ENCODE measurements at regions of chr10 and their contacts with region 1.

Region 1: DNA sequence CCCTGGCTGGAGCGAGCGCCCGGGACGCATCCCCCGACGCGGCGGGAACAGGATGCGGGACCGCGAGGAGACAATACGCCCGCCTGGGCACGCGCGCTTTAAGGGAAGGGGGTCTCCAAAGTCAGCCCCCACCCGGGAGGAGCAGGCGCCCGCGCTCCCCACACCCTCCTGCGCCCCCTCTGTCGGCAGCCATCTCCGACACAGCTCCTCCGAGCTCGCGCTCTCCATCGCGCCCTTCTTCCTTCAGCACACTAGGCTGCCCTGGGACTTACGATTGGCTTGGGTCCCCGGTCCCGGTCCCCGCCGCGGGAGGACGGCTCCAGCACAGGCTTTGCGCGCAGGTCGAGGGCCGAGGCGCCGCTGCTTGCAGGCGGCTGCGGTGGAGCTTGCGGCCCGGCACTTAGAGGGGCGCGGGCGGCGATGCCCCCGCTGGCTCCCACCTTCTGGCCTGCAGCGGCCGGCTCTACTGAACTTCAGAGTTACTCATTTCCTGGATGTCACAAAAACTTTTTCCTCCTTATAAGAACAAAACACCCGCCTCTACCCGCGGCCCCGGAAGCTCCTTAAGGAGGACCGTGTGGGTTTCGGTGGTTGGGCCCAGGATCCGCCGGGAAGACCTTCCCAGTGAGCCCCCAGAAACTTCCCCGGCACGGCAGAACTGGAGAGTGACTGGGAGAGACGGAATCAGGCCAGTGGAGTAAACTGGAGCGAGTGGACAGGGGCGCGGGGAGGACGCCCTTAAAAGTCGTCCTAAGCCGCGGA is at the start of gene ITPRIP:
- DNase-seq: peak in 1 of 2 experiments; percentile 82
- H3K4me3 ChIP-seq: peak within 1 kb of the TSS; percentile 73 to 90 (median 80)
- H3K27ac ChIP-seq: peak within 1 kb of the TSS; percentile 87
- H3K4me1 ChIP-seq: peaks cover 18 to 32% (median 23%) of the 10 kb centered on the region in 4 experiments
- H3K27me3 ChIP-seq: peaks cover 0 to 2% (median 0%) of the 10 kb centered on the region in 4 experiments; a peak in 1 of 7 replicates
- CTCF ChIP-seq: peak in 2 of 3 experiments; percentile 21 to 32; a peak in 2 of 4 replicates
- EP300 ChIP-seq: no peak
- POLR2A ChIP-seq: peak in 1 of 2 experiments; percentile 79; a peak in 2 of 3 replicates
- RAD21 ChIP-seq: no peak
- total RNA-seq, gene ITPRIP: 16.9 and 17.1 TPM in 2 replicates

Region 2: DNA sequence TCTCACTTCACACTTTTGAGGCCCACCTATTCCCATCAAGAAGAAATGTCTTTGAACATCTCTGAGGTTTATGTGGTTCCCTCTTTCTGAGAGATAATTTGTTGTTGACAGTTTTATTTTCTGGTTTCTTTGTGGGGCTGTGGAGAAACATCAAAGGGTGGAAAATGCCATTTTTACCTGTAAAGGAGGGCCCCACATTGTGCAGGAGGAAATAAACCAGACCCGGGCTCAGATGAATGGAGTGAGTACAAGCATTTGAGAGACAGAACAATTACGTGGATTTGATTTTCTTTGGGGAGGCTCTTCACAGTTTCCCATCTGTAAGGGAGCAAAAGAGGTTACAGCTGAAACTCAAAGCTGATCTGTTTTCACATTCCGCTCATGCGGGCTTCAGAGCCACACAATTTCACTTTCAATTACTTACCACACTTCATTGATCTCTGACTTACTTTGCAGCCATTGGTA is 29.7 kb before region 1 on chr10:
- CTCF ChIA-PET with region 1: interaction called, 86 read pairs
- POLR2A ChIA-PET with region 1: interaction called, 5 read pairs
- DNase-seq: no peak
- H3K4me3 ChIP-seq: no peak overlapping the region
- H3K27ac ChIP-seq: no peak overlapping the region
- H3K4me1 ChIP-seq: peaks cover 0 to 7% (median 3%) of the 10 kb centered on the region in 4 experiments; a peak in 3 of 7 replicates
- H3K27me3 ChIP-seq: no peaks in the 10 kb centered on the region
- CTCF ChIP-seq: no peak
- EP300 ChIP-seq: no peak
- POLR2A ChIP-seq: no peak
- RAD21 ChIP-seq: no peak

Region 3: DNA sequence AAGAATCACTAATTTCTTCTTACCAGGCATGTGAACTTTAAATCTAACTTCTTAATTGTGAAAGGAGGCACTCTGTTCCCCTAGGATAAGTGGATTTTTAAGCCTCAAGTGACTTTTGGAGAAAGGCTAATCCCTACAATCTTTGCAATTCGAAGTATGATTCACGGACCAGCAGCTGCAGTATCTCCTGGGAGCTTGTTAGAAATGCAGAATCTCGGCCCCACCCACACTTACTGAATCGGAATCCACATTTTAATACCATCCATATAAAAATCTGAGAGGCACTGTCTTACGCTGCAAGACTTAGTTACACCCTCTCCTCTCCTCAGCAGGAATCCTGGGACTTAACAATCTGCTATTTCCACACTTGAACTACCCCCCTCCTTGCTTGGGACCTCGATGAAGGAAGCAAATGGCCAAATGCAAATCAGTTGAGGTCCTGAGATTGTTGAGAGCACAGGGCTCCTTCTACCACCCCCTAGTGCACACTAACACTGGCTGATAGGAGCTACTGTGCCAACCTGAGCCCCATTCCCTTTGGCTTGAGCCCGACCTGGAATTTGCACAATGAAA is 20.9 kb before region 1 on chr10:
- CTCF ChIA-PET with region 1: interaction called, 21 read pairs
- POLR2A ChIA-PET with region 1: interaction called, 19 read pairs
- DNase-seq: no peak
- H3K4me3 ChIP-seq: no peak overlapping the region
- H3K27ac ChIP-seq: 0 out of 2 replicates have a peak overlapping the region, but pooled peaks have one; percentile 13
- H3K4me1 ChIP-seq: peaks cover 0 to 29% (median 23%) of the 10 kb centered on the region in 4 experiments; a peak in 6 of 7 replicates
- H3K27me3 ChIP-seq: no peaks in the 10 kb centered on the region
- CTCF ChIP-seq: peak in 1 of 3 experiments; percentile 17; a peak in 1 of 4 replicates
- EP300 ChIP-seq: no peak
- POLR2A ChIP-seq: no peak
- RAD21 ChIP-seq: peak in 1 of 2 experiments; percentile 9; a peak in 1 of 4 replicates

Region 4: GRCh38 chr10:104322416-104322782 is 15.8 kb before region 1 on chr10:
- CTCF ChIA-PET with region 1: interaction called, 21 read pairs
- POLR2A ChIA-PET with region 1: interaction called, 37 read pairs
- DNase-seq: no peak
- H3K4me3 ChIP-seq: peak overlapping the region in 1 of 4 experiments; percentile 14; a peak in 1 of 8 replicates
- H3K27ac ChIP-seq: no peak overlapping the region
- H3K4me1 ChIP-seq: peaks cover 15 to 56% (median 41%) of the 10 kb centered on the region in 4 experiments
- H3K27me3 ChIP-seq: no peaks in the 10 kb centered on the region
- CTCF ChIP-seq: no peak
- EP300 ChIP-seq: no peak
- POLR2A ChIP-seq: no peak
- RAD21 ChIP-seq: no peak

Region 5: GRCh38 chr10:104353325-104354048 is 15.3 kb after region 1 on chr10 and contains the start of gene CFAP58:
- CTCF ChIA-PET with region 1: interaction called, 17 read pairs
- POLR2A ChIA-PET with region 1: interaction called, 8 read pairs
- DNase-seq: peak; percentile 79 to 98
- H3K4me3 ChIP-seq: peak within 1 kb of the TSS; percentile 35 to 71 (median 52); a peak in 7 of 8 replicates
- H3K27ac ChIP-seq: no peak within 1 kb of the TSS
- H3K4me1 ChIP-seq: peaks cover 0 to 9% (median 1%) of the 10 kb centered on the region in 4 experiments; a peak in 2 of 7 replicates
- H3K27me3 ChIP-seq: peaks cover 5 to 13% (median 10%) of the 10 kb centered on the region in 4 experiments
- CTCF ChIP-seq: peak; percentile 67 to 80 (median 69)
- EP300 ChIP-seq: no peak
- POLR2A ChIP-seq: no peak
- RAD21 ChIP-seq: peak; percentile 12 to 27; a peak in 2 of 4 replicates
- total RNA-seq, gene CFAP58: 0.71 and 1.1 TPM in 2 replicates